Astrocyte of the cerebellum (primary cell): ENCODE measurements at regions of chr15 and their contacts with region 1.

Region 1: DNA sequence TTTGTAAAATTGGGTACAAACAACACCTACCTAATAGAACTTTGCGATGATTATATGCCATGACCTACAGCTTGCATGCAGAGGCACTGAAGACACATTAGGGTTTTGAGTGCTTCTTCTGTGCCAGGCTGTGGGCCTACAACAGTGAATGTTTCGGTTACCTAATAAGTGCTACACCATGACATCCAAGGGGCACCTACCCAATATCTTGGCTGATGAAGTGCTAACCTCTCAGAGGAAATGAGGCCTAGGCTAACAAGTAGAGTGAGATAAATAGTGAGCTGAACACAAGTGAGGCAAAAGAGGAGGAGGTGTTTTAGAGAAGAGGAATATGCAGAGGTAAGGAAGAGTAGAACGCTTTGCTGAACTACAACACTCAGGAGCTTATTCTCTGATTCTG is 12.2 kb upstream of the RASGRP1 start:
- DNase-seq: no peak
- H3K4me3 ChIP-seq: no peak overlapping the region
- CTCF ChIP-seq: no peak

Region 2: GRCh38 chr15:38671675-38672254 is 94.9 kb after region 1 on chr15:
- in situ Hi-C with region 1: loop called (anchors 10 kb)
- DNase-seq: no peak
- H3K4me3 ChIP-seq: no peak overlapping the region
- CTCF ChIP-seq: no peak